Left cardiac atrium (tissue), 4 donors: ENCODE measurements at regions of chr2 and their contacts with region 1.

Region 1: DNA sequence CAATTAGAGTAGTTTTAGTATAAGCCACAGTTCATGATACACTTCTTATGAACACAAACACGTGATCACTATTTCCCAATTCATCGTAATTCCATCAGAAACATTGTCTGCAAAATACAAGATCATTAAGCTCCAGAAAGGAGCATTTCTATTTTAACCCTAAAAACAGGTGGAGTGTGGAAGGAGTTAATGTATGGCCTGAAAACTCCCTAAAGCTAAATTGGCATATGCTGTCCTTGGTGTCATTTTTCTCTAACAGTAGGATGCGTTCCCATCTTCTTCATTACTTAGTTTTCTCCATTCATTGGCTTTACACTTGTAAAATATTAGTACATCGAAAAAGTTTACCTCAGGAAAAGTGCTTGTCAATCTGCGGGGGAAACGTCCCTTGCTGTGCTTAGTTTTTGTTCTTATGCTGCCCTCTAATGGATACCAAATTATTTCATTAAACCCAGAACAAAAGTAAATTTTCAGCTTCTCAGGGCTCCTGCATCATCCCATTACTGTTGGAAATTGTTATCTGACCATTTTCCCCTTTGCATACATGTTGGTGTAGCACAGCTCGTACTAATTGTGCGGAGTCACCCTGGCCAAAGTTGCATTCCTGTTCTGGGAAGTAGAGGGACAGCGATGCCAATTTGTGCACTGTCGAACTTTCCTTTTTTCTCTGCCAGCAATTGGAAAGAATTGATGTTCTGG is 153.4 kb downstream of the GPD2 start:
- DNase-seq: no peak
- ATAC-seq: peak; percentile 52 to 85

Region 2: GRCh38 chr2:155377266-155377680 is 1212.3 kb before region 1 on chr2:
- intact Hi-C with region 1: loop called in 1 of 2 experiments (anchors 5 kb)
- DNase-seq: no peak
- ATAC-seq: no peak

Region 3: GRCh38 chr2:156192468-156192867 is 397.1 kb before region 1 on chr2:
- intact Hi-C with region 1: loop called in 1 of 2 experiments (anchors 5 kb)
- DNase-seq: no peak
- ATAC-seq: no peak

Region 4: GRCh38 chr2:156332534-156333273 is 256.8 kb before region 1 on chr2 and contains the start of gene NR4A2:
- intact Hi-C with region 1: loop called in 1 of 2 experiments (anchors 5 kb)
- DNase-seq: peak; percentile 93
- ATAC-seq: peak; percentile 72 to 81
- total RNA-seq, gene NR4A2: 2.4 to 9.2 TPM

Region 5: GRCh38 chr2:156573710-156574109 is 15.8 kb before region 1 on chr2:
- intact Hi-C with region 1: no loop called
- DNase-seq: no peak
- ATAC-seq: no peak

Region 6: DNA sequence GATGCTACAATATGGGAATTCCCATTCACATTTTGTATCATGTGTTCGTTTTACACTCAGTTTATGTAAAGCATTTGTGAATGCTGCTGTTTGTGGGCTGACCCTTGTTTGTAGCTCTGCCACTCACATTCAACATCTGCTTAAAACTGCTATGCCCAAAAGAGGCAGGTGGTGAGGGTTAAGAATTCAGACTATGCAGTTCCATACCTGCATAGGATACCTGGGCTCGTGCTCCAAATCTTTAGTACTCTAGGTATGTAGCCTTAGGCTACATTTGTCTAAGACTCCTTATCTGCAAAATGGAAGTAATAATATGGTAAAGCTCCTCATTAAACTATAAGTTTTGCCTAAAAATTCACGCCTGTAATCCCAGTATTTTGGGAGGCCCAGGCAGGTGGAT is 46.1 kb after region 1 on chr2:
- intact Hi-C with region 1: no loop called
- DNase-seq: no peak
- ATAC-seq: no peak

Region 7: GRCh38 chr2:156845806-156846558 is 256.5 kb after region 1 on chr2:
- intact Hi-C with region 1: no loop called
- DNase-seq: no peak
- ATAC-seq: no peak

Region 8: GRCh38 chr2:156892467-156893281 is 303.1 kb after region 1 on chr2:
- intact Hi-C with region 1: loop called in 1 of 2 experiments (anchors 5 kb)
- DNase-seq: no peak
- ATAC-seq: peak; percentile 74 to 78

Region 9: GRCh38 chr2:157587576-157587975 is 998.0 kb after region 1 on chr2:
- intact Hi-C with region 1: no loop called
- DNase-seq: no peak
- ATAC-seq: no peak